Left cardiac atrium (tissue), 4 donors: ENCODE measurements at regions of chr3 and their contacts with region 1.

Region 1: GRCh38 chr3:73848173-73848906 is 223.6 kb upstream of the PDZRN3 start:
- DNase-seq: no peak
- ATAC-seq: peak in 1 of 2 donors; percentile 65

Region 2: GRCh38 chr3:73508330-73508954 is 339.9 kb before region 1 on chr3:
- intact Hi-C with region 1: loop called in 1 of 2 experiments (anchors 5 kb)
- DNase-seq: peak; percentile 42
- ATAC-seq: peak; percentile 69 to 74

Region 3: DNA sequence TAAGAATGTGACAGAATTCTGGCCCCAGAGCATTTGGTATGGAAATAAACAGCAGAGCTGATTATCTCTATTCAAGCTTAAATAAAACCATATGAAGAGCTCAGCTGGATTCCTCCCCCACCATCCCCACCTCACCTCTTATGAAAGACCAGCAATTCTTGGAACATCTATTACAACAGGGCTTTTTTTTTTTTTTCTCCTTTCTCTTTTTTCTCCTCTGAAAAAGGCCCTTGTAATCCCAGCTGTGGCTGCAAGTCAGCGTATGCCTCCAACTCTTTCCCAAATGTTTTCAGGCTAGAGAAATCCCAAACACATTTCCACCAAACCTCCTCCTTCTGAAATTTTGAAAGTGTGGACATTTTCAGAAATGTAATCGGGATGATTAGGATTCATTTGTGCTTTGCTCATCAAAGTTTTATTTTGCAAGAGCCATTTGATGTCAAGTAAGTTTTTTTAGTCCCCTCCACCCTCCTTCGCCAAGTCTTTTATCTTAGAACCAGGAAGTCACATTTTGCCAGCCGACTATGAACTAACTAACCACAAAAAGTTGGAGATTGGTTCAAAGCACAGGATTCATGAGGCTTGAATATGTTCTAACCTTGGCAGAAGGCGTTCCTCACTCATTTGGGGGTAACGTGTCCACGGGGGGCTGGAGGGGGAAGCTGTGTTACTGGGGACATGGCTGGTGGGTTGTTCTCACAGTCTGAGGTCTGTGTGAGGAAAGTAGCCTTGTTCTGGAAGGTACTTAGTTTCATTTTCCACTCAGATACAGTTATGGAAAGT is 81.5 kb before region 1 on chr3:
- intact Hi-C with region 1: no loop called
- DNase-seq: no peak
- ATAC-seq: peak; percentile 57 to 80